ENCODE measurements at regions of chr7 and their contacts with region 1.

Region 1: GRCh38 chr7:74173866-74174605 is at the start of gene EIF4H:
- DNase-seq: peak; percentile 92 to 98 (median 95)
- ATAC-seq: peak; percentile 85
- H3K4me3 ChIP-seq: peak within 1 kb of the TSS; percentile 85
- H3K4me3 Mint-ChIP-seq: peak within 1 kb of the TSS; percentile 96
- H3K27ac ChIP-seq: peak within 1 kb of the TSS; percentile 61 to 75
- H3K27ac Mint-ChIP-seq: peak within 1 kb of the TSS; percentile 95
- H3K4me1 ChIP-seq: peaks cover 46% of the 10 kb centered on the region
- H3K4me1 Mint-ChIP-seq: peaks cover 53% of the 10 kb centered on the region
- H3K27me3 ChIP-seq: no peaks in the 10 kb centered on the region
- H3K27me3 Mint-ChIP-seq: no peaks in the 10 kb centered on the region
- CTCF ChIP-seq: no peak
- total RNA-seq, gene EIF4H: 311 to 316 TPM

Region 2: GRCh38 chr7:73557108-73557396 is 617.0 kb before region 1 on chr7:
- CTCF ChIA-PET with region 1: no interaction called
- POLR2A ChIA-PET with region 1: no interaction called
- intact Hi-C with region 1: loop called in 1 of 2 experiments (anchors 10 kb)
- DNase-seq: peak; percentile 77 to 97 (median 88)
- ATAC-seq: peak; percentile 92
- H3K4me3 ChIP-seq: peak overlapping the region; percentile 96
- H3K4me3 Mint-ChIP-seq: peak overlapping the region; percentile 96
- H3K27ac ChIP-seq: peak overlapping the region; percentile 97 to 98
- H3K27ac Mint-ChIP-seq: peak overlapping the region; percentile 96
- H3K4me1 ChIP-seq: peaks cover 35% of the 10 kb centered on the region
- H3K4me1 Mint-ChIP-seq: peaks cover 39% of the 10 kb centered on the region
- H3K27me3 ChIP-seq: no peaks in the 10 kb centered on the region
- H3K27me3 Mint-ChIP-seq: no peaks in the 10 kb centered on the region
- CTCF ChIP-seq: no peak

Region 3: DNA sequence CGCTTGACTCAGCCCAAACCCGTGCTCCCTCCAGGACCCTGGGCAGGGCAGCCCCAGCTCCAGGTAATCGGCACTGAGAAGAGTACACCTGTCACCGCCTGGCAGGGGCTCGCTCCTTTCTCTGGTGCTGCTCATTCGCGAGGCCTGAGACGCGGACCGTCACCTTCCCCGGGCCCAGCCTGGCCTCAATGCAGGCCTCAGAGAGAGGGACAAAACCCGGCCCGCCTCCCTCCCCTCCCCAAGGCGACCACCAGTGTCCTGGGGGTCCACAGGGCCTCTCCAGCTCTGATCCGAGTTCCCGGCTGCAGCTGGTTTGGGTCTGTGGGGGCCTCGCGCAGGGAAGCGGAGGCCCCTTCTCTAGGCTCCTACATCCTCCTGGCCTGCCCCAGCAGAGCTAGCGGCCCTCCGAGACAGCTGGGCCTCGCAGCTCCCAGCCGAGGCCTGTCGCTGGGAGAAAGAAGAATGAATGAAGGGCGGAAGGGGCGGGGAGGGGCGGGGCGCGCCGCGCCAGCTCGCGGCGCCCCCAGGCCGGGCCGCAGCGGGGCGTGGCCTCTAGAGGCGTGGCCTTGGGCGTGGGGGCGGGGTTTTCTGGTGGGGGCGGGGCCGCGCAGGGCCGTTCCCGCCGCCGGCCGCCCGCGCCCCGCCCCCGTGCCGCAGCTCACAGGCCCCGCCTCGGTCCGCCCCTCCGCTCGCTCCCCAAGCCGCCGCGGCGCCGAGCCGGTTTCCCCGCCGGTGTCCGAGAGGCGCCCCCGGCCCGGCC is 90.7 kb before region 1 on chr7 and contains the start of gene LIMK1:
- CTCF ChIA-PET with region 1: no interaction called
- POLR2A ChIA-PET with region 1: interaction called, 22 read pairs
- intact Hi-C with region 1: loop called in 1 of 2 experiments (anchors 5 kb)
- DNase-seq: peak; percentile 63 to 94 (median 82)
- ATAC-seq: peak; percentile 95
- H3K4me3 ChIP-seq: peak within 1 kb of the TSS; percentile 67
- H3K4me3 Mint-ChIP-seq: peak within 1 kb of the TSS; percentile 88
- H3K27ac ChIP-seq: no peak within 1 kb of the TSS
- H3K27ac Mint-ChIP-seq: peak within 1 kb of the TSS; percentile 62
- H3K4me1 ChIP-seq: peaks cover 20% of the 10 kb centered on the region
- H3K4me1 Mint-ChIP-seq: peaks cover 9% of the 10 kb centered on the region
- H3K27me3 ChIP-seq: no peaks in the 10 kb centered on the region
- H3K27me3 Mint-ChIP-seq: no peaks in the 10 kb centered on the region
- CTCF ChIP-seq: no peak
- total RNA-seq, gene LIMK1: 7.8 to 8.2 TPM

Region 4: GRCh38 chr7:74206589-74207120 is 32.6 kb after region 1 on chr7:
- CTCF ChIA-PET with region 1: interaction called, 12 read pairs
- POLR2A ChIA-PET with region 1: interaction called, 3 read pairs
- intact Hi-C with region 1: no loop called
- DNase-seq: peak; percentile 61 to 87 (median 74)
- ATAC-seq: peak; percentile 77
- H3K4me3 ChIP-seq: peak overlapping the region; percentile 30
- H3K4me3 Mint-ChIP-seq: no peak overlapping the region
- H3K27ac ChIP-seq: no peak overlapping the region
- H3K27ac Mint-ChIP-seq: no peak overlapping the region
- H3K4me1 ChIP-seq: peaks cover 34% of the 10 kb centered on the region
- H3K4me1 Mint-ChIP-seq: peaks cover 13% of the 10 kb centered on the region
- H3K27me3 ChIP-seq: no peaks in the 10 kb centered on the region
- H3K27me3 Mint-ChIP-seq: peaks cover 5% of the 10 kb centered on the region
- CTCF ChIP-seq: peak; percentile 96

Region 5: DNA sequence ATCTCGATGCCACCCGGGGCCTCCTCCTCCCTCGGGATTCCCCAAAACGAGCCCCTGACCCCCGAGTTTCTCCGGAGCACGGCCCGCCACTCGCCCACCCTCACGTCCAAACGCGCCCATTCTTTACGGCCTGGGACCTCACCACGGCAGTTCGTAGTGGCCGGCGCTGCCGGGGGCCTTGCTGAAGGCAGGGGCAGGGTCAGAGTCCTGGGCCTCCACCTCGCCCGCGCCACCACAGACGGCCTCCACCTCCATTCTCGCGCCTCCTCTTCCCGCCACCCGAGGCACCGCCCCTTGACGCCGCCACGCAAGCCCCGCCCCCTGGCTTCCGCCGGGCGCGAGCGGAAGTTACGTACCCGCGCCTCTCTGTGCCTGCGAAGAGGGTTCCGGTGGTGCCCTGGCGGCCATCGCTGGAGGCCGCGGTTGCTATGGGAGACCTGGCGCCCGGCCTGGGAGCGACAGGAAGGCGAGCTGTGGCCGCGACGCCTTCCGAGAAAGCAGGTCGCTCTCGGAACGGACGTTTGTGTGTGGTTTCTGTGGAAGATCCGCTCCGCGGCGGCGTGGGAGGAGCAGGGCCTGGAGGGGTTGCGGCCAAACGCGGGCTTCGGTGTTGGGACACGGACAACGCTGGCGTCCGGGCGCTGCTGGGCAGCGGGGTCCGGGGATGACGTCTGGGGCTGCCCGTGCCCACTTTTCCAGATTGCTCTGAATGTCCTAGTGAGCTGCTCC is 80.3 kb after region 1 on chr7 and contains the start of gene RFC2:
- CTCF ChIA-PET with region 1: no interaction called
- POLR2A ChIA-PET with region 1: no interaction called
- intact Hi-C with region 1: loop called in 1 of 2 experiments (anchors 1 kb)
- DNase-seq: peak; percentile 91 to 99 (median 96)
- ATAC-seq: peak; percentile 96
- H3K4me3 ChIP-seq: peak within 1 kb of the TSS; percentile 92
- H3K4me3 Mint-ChIP-seq: peak within 1 kb of the TSS; percentile 92
- H3K27ac ChIP-seq: peak within 1 kb of the TSS; percentile 83
- H3K27ac Mint-ChIP-seq: peak within 1 kb of the TSS; percentile 93
- H3K4me1 ChIP-seq: peaks cover 31% of the 10 kb centered on the region
- H3K4me1 Mint-ChIP-seq: peaks cover 26% of the 10 kb centered on the region
- H3K27me3 ChIP-seq: no peaks in the 10 kb centered on the region
- H3K27me3 Mint-ChIP-seq: no peaks in the 10 kb centered on the region
- CTCF ChIP-seq: peak; percentile 33
- total RNA-seq, gene RFC2: 8.5 to 9.6 TPM

Region 6: DNA sequence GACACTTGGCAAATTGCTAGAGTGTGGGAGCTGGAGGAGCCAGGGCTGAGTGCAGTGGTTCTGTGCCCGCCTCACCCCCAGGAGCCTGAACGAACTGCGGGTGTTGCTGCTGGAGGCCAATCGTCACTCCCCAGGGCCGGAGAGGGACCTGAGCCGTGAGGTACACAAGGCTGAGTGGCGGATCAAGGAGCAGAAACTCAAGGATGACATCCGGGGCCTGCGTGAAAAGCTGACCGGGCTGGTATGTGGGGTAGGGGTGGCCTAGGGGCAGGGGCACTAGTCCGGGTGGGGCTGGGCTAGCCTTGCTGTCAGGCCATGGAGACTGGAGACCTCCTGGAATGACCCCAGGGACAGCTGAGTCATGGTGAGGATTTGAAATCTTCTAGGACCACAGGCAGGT is 223.0 kb after region 1 on chr7:
- CTCF ChIA-PET with region 1: no interaction called
- POLR2A ChIA-PET with region 1: no interaction called
- intact Hi-C with region 1: no loop called
- DNase-seq: no peak
- ATAC-seq: no peak
- H3K4me3 ChIP-seq: no peak overlapping the region
- H3K4me3 Mint-ChIP-seq: no peak overlapping the region
- H3K27ac ChIP-seq: no peak overlapping the region
- H3K27ac Mint-ChIP-seq: no peak overlapping the region
- H3K4me1 ChIP-seq: peaks cover 4% of the 10 kb centered on the region
- H3K4me1 Mint-ChIP-seq: no peaks in the 10 kb centered on the region
- H3K27me3 ChIP-seq: no peaks in the 10 kb centered on the region
- H3K27me3 Mint-ChIP-seq: no peaks in the 10 kb centered on the region
- CTCF ChIP-seq: no peak

Measured in CD4-positive, alpha-beta T cell (primary cell).